Calu3 (cell line): ENCODE measurements at regions of chr5 and their contacts with region 1.

Region 1: GRCh38 chr5:43389679-43390329 is 22.4 kb downstream of the CCL28 start:
- DNase-seq: peak; percentile 75
- H3K4me3 Mint-ChIP-seq: no peak overlapping the region
- H3K27ac Mint-ChIP-seq: no peak overlapping the region
- H3K4me1 Mint-ChIP-seq: no peaks in the 10 kb centered on the region
- H3K27me3 Mint-ChIP-seq: no peaks in the 10 kb centered on the region
- CTCF ChIP-seq: peak; percentile 80

Region 2: GRCh38 chr5:43227655-43228054 is 162.1 kb before region 1 on chr5:
- CTCF ChIA-PET with region 1: interaction called, 12 read pairs
- intact Hi-C with region 1: loop called (anchors 1 kb)
- DNase-seq: no peak
- H3K4me3 Mint-ChIP-seq: no peak overlapping the region
- H3K27ac Mint-ChIP-seq: no peak overlapping the region
- H3K4me1 Mint-ChIP-seq: no peaks in the 10 kb centered on the region
- H3K27me3 Mint-ChIP-seq: no peaks in the 10 kb centered on the region
- CTCF ChIP-seq: peak; percentile 37